CD8-positive, alpha-beta memory T cell (primary cell): ENCODE measurements at regions of chr4 and their contacts with region 1.

Region 1: DNA sequence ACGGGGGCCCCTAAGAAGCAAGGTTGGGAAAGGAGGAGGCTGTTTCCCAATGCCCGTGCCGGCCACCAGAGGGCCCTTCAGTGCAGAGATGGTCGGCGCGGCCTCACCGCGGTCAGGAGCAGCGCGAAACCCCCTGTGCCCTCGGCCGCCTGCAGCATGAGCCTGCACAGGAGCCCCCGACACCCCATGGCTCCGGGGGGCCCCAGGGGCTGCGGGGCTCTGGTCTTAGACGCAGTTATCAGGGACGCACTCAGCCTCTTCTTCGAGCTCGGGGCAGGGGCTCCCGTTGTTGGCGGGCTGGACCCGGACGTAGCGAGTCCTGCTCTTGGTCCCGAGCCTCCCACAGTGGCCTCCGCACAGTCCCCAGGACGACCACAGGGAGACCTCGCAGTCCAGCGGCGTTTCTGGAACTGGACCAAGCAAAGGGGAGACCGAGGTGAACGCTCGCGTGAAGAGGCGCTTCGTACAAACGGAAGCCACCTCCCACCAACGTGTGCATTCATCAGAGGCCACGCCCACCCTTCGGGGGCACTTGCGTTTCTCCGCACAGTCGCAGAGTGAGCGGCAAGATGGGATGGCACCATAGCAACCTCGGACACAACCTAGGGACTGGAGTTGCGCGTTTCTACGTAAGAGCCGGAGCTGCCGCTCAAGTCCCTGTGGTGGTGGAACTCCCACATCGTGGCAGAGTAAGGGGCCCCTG is 5.0 kb downstream of the SPON2 start:
- DNase-seq: peak; percentile 84 to 92 (median 86)
- H3K4me3 ChIP-seq: peak overlapping the region; percentile 98
- H3K4me3 Mint-ChIP-seq: peak overlapping the region; percentile 82 to 92 (median 88)
- H3K27ac ChIP-seq: peak overlapping the region; percentile 87
- H3K27ac Mint-ChIP-seq: peak overlapping the region; percentile 72 to 93 (median 89)
- H3K4me1 ChIP-seq: peaks cover 25% of the 10 kb centered on the region
- H3K4me1 Mint-ChIP-seq: peaks cover 15 to 40% (median 19%) of the 10 kb centered on the region in 3 donors
- H3K27me3 ChIP-seq: peaks cover 11% of the 10 kb centered on the region
- H3K27me3 Mint-ChIP-seq: peaks cover 2 to 3% of the 10 kb centered on the region in 2 donors

Region 2: GRCh38 chr4:1098311-1098925 is 69.0 kb before region 1 on chr4:
- CTCF ChIA-PET with region 1: no interaction called
- POLR2A ChIA-PET with region 1: no interaction called
- DNase-seq: no peak
- H3K4me3 ChIP-seq: no peak overlapping the region
- H3K4me3 Mint-ChIP-seq: no peak overlapping the region
- H3K27ac ChIP-seq: no peak overlapping the region
- H3K27ac Mint-ChIP-seq: no peak overlapping the region
- H3K4me1 ChIP-seq: no peaks in the 10 kb centered on the region
- H3K4me1 Mint-ChIP-seq: no peaks in the 10 kb centered on the region
- H3K27me3 ChIP-seq: no peaks in the 10 kb centered on the region
- H3K27me3 Mint-ChIP-seq: peaks cover 0 to 5% of the 10 kb centered on the region in 2 donors

Region 3: GRCh38 chr4:1151541-1151940 is 15.9 kb before region 1 on chr4:
- CTCF ChIA-PET with region 1: interaction called, 13 read pairs
- POLR2A ChIA-PET with region 1: no interaction called
- DNase-seq: no peak
- H3K4me3 ChIP-seq: no peak overlapping the region
- H3K4me3 Mint-ChIP-seq: no peak overlapping the region
- H3K27ac ChIP-seq: no peak overlapping the region
- H3K27ac Mint-ChIP-seq: no peak overlapping the region
- H3K4me1 ChIP-seq: no peaks in the 10 kb centered on the region
- H3K4me1 Mint-ChIP-seq: no peaks in the 10 kb centered on the region
- H3K27me3 ChIP-seq: peaks cover 4% of the 10 kb centered on the region
- H3K27me3 Mint-ChIP-seq: peaks cover 21 to 22% of the 10 kb centered on the region in 2 donors

Region 4: GRCh38 chr4:1183985-1184773 is 16.8 kb after region 1 on chr4:
- CTCF ChIA-PET with region 1: interaction called, 11 read pairs
- POLR2A ChIA-PET with region 1: no interaction called
- DNase-seq: no peak
- H3K4me3 ChIP-seq: no peak overlapping the region
- H3K4me3 Mint-ChIP-seq: peak overlapping the region; percentile 62 to 85 (median 80)
- H3K27ac ChIP-seq: no peak overlapping the region
- H3K27ac Mint-ChIP-seq: peak overlapping the region; percentile 76 to 91 (median 82)
- H3K4me1 ChIP-seq: peaks cover 27% of the 10 kb centered on the region
- H3K4me1 Mint-ChIP-seq: peaks cover 50 to 74% (median 66%) of the 10 kb centered on the region in 3 donors
- H3K27me3 ChIP-seq: no peaks in the 10 kb centered on the region
- H3K27me3 Mint-ChIP-seq: peaks cover 0 to 4% of the 10 kb centered on the region in 2 donors

Region 5: DNA sequence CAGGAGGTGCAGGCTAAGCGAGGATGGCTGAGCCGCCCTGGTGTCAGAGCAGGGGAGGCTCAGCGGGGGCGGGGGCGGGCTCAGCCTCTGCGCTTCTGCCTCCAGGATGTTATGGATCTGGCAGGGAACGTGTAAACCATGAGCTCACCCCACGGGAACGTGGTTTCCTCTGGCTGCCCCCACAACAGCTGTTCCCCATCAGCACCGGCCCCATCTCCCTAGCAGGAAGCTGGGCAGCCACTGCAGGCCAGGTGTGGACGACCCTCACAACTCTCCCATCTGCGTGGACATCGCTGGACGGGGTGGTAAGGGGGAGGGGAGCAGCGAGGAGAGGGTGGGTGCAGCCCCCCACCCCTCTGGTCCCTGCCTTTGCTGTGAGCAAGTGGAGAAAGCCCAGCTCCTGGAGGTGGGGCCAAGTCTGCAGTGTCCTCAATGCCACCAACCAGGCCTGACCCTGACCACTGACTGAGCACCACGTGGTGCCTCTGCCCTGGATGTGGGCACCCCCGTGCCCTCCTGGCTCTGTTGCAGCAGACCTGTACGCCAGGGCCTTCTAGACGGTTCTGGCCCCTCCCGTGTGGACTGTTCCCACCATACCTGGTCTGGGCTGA is 33.1 kb after region 1 on chr4:
- CTCF ChIA-PET with region 1: interaction called, 38 read pairs
- POLR2A ChIA-PET with region 1: no interaction called
- DNase-seq: peak in 4 of 5 donors; percentile 18 to 54 (median 32)
- H3K4me3 ChIP-seq: peak overlapping the region; percentile 59
- H3K4me3 Mint-ChIP-seq: peak overlapping the region; percentile 64 to 98 (median 89)
- H3K27ac ChIP-seq: peak overlapping the region; percentile 81
- H3K27ac Mint-ChIP-seq: peak overlapping the region; percentile 92 to 100 (median 97)
- H3K4me1 ChIP-seq: peaks cover 55% of the 10 kb centered on the region
- H3K4me1 Mint-ChIP-seq: peaks cover 58 to 86% (median 66%) of the 10 kb centered on the region in 3 donors
- H3K27me3 ChIP-seq: no peaks in the 10 kb centered on the region
- H3K27me3 Mint-ChIP-seq: no peaks in the 10 kb centered on the region

Region 6: GRCh38 chr4:1249148-1249730 is 81.8 kb after region 1 on chr4:
- CTCF ChIA-PET with region 1: interaction called, 11 read pairs
- POLR2A ChIA-PET with region 1: interaction called, 3 read pairs
- DNase-seq: peak; percentile 75 to 91 (median 87)
- H3K4me3 ChIP-seq: peak overlapping the region; percentile 74
- H3K4me3 Mint-ChIP-seq: peak overlapping the region; percentile 87 to 96 (median 90)
- H3K27ac ChIP-seq: peak overlapping the region; percentile 89
- H3K27ac Mint-ChIP-seq: peak overlapping the region; percentile 92 to 99 (median 94)
- H3K4me1 ChIP-seq: peaks cover 69% of the 10 kb centered on the region
- H3K4me1 Mint-ChIP-seq: peaks cover 58 to 74% (median 63%) of the 10 kb centered on the region in 3 donors
- H3K27me3 ChIP-seq: no peaks in the 10 kb centered on the region
- H3K27me3 Mint-ChIP-seq: peaks cover 0 to 3% of the 10 kb centered on the region in 2 donors

Region 7: GRCh38 chr4:1266881-1267763 is 99.7 kb after region 1 on chr4:
- CTCF ChIA-PET with region 1: interaction called, 48 read pairs
- POLR2A ChIA-PET with region 1: no interaction called
- DNase-seq: peak in 2 of 5 donors; percentile 17 to 64
- H3K4me3 ChIP-seq: peak overlapping the region; percentile 58
- H3K4me3 Mint-ChIP-seq: peak overlapping the region; percentile 77 to 95 (median 83)
- H3K27ac ChIP-seq: peak overlapping the region; percentile 59
- H3K27ac Mint-ChIP-seq: peak overlapping the region; percentile 92 to 98 (median 95)
- H3K4me1 ChIP-seq: peaks cover 8% of the 10 kb centered on the region
- H3K4me1 Mint-ChIP-seq: peaks cover 10 to 15% (median 11%) of the 10 kb centered on the region in 3 donors
- H3K27me3 ChIP-seq: no peaks in the 10 kb centered on the region
- H3K27me3 Mint-ChIP-seq: peaks cover 0 to 2% of the 10 kb centered on the region in 2 donors